ENCODE measurements at regions of chr16 and their contacts with region 1.

Region 1: GRCh38 chr16:72832621-72833248 is 215.2 kb downstream of the ZFHX3 start:
- DNase-seq: peak; percentile 81
- H3K4me3 ChIP-seq: no peak overlapping the region
- H3K27ac ChIP-seq: no peak overlapping the region
- H3K4me1 ChIP-seq: no peaks in the 10 kb centered on the region
- H3K27me3 ChIP-seq: no peaks in the 10 kb centered on the region
- CTCF ChIP-seq: peak; percentile 100

Region 2: GRCh38 chr16:72961121-72961763 is 128.5 kb after region 1 on chr16:
- CTCF ChIA-PET with region 1: interaction called, 19 read pairs
- POLR2A ChIA-PET with region 1: no interaction called
- intact Hi-C with region 1: loop called (anchors 2 kb)
- DNase-seq: peak; percentile 36
- H3K4me3 ChIP-seq: no peak overlapping the region
- H3K27ac ChIP-seq: no peak overlapping the region
- H3K4me1 ChIP-seq: no peaks in the 10 kb centered on the region
- H3K27me3 ChIP-seq: no peaks in the 10 kb centered on the region
- CTCF ChIP-seq: peak; percentile 68

Region 3: DNA sequence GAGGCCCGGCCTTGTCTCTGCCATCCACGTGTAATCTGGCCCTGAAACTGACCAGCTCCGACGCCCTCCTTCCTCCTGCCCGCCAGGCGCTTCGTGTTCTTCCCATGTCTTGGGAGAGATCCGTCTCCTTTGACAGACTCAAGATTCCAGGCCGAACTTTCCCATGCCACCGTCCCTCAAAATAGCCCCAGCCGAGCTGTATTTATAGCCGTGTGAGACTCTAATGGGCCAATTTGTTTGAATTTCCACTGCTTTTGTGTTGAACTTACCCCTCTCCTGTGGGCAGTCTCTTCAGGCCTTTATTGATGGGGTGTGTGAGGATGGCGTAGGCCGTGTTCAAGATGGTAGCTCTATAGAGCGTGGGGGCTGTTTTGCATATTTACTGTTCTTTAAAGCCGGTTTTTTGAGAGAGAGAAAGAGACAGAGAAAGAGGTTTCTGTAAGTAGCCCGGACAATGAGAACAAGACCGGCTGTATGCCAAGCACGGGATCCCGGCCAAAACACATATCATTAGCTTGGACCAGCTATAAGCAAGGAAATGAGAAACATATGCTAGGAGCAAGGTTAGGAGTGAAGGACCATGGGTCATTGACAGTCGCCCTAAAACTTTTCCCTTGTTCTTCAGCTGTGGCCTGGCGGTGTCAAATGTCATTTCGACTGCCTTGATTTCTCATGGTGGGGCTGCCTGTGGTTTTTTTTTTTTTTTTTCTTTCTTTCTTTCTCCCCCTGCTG is 339.7 kb after region 1 on chr16:
- CTCF ChIA-PET with region 1: interaction called, 5 read pairs
- POLR2A ChIA-PET with region 1: no interaction called
- intact Hi-C with region 1: loop called (anchors 5 kb)
- DNase-seq: peak; percentile 88
- H3K4me3 ChIP-seq: peak overlapping the region; percentile 18
- H3K27ac ChIP-seq: peak overlapping the region; percentile 79
- H3K4me1 ChIP-seq: peaks cover 41% of the 10 kb centered on the region
- H3K27me3 ChIP-seq: no peaks in the 10 kb centered on the region
- CTCF ChIP-seq: no peak; the same call in 1 of the 2 replicates

Region 4: DNA sequence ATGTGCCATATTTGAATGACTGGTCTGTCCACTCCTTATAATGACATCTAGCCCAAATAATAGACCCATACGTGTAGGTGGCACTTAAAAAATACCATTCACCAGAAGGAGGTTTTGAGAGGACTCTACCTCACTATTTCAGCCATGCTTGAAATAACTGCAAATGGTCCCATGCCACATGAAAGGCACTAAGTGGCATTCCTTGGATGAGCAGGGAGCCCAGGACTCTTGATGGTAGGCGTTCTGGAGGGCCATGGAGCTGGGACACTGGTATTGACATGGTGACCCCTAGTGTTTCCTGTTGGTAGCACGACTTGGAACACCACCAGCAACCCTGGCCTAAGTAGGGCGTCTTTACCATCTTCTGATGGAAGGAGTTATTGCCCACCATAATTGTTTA is 363.9 kb after region 1 on chr16:
- CTCF ChIA-PET with region 1: interaction called, 12 read pairs
- POLR2A ChIA-PET with region 1: no interaction called
- intact Hi-C with region 1: loop called (anchors 5 kb)
- DNase-seq: peak; percentile 84
- H3K4me3 ChIP-seq: no peak overlapping the region
- H3K27ac ChIP-seq: no peak overlapping the region
- H3K4me1 ChIP-seq: no peaks in the 10 kb centered on the region
- H3K27me3 ChIP-seq: no peaks in the 10 kb centered on the region
- CTCF ChIP-seq: peak; percentile 78